Left cardiac atrium (tissue), 4 donors: ENCODE measurements at regions of chr2 and their contacts with region 1.

Region 1: GRCh38 chr2:206783718-206784117 is 18.3 kb downstream of the FASTKD2 start:
- DNase-seq: no peak
- ATAC-seq: no peak

Region 2: DNA sequence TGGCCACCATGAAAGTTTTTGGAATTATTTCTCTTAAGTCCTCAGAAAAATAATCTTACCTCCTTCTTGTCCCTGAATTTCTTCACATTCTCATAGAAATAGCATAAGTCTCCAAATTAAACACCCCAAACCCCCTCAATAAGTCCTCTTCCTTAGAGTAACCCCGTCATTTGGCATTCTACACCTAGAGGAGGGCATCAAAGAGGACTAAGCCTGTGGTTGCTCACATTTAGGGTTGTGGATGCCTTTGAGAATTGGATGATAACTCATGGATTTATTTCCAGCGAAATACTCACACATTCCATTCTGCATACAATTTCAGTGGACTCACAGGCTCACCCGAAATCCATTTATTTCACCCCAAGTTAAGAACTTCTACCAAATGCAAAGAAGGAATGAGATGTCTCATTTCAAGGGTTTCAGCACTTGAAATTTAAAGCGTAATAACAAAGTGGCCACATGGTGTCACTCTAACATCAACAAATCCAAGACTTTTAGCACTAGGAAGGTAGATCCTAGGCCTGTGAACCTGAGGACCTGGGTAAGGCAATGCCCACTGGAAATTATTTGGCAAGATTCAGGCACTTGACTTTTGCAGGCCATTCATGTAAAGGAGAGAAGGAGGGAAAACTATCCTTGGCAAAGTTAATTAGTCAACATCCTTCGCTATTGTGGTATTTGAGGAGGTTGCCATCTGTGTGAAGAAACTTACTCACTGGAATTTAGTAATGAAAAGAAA is 90.2 kb before region 1 on chr2:
- intact Hi-C with region 1: loop called (anchors 5 kb)
- DNase-seq: no peak
- ATAC-seq: peak; percentile 41 to 73

Region 3: GRCh38 chr2:206728277-206729199 is 55.2 kb before region 1 on chr2:
- intact Hi-C with region 1: no loop called
- DNase-seq: no peak
- ATAC-seq: peak; percentile 38 to 47

Region 4: DNA sequence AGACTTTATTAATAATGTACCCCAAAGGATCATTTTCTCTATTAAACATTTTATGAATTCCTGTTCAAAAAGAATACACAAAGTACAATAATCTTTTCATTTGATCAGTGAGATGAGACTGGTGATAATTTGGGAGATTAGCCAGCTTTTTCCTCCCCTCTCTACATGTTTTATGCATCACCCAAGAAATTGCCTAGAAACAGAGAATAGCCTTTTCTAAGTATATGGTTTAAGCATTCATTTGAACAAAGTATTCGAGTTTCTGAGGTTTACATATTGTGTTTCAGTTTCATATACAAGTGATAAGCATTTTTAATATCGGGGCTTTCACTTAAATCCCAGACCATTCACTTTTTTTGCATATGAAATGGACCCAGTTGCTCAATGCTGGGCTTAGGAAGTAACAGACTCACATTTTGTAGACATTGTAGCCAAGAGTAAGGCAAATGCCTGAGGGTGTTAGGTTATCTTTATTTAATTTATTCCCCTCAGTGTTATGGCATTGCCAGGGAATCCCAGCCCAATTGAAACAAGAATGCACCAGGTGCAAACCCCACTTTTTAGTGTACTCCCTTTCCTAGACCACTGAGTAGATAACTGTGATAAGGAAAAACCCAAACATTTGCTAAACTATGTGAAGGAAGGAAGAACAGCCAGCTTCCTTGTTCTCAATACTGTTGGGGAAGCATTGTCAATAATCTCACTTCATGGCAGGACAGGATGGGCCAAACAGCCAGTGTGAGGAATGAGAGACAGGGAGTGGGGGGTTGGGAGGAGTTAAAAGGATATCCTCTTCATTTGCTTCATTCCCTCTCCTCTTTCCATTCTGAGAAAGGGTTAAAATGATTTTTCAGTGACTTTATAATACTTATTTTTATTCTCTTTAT is 159.1 kb after region 1 on chr2:
- intact Hi-C with region 1: no loop called
- DNase-seq: no peak
- ATAC-seq: no peak